GM10248 (cell line): ENCODE measurements at regions of chr1 and their contacts with region 1.

Region 1: DNA sequence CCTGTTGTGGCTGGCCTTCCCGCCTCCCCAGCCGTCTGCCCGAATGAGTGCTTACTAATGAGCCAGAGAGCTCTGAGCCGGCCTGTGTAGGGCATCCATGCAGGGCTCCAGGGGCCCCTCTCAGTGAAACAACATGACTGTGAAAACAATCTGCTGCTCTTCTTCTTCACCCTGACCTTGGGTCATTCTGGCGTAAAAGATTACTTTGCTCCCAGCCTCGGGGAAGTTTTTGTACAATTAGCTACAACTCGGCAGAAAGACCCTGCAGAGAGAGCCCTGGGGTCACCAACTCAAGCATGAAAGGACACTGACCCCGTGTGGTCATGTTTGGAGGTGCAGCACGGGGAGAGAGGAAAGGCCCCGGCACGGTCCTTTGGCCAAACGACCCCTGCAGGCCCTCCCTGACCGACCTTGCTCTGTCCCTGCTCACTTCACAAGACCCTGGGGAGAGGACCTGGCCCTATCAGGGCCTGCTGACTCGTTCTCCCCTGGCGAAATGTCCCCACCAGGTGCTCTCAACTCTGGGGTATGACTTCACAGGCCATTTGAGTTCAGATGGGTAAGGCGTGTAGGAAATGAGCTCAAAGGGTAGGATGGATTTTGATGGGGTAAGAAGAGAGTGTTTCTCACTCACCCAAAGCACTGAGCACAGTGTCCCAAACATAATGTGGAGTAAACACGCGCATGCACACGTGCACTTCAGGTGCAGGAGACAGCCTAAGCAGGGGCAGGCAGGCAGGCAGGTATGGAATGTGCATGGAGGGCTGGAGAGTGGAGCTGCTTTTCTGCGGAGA is 22.9 kb upstream of the FAM20B start:
- DNase-seq: peak; percentile 66
- CTCF ChIP-seq: peak; percentile 90

Region 2: GRCh38 chr1:178532392-178532791 is 470.4 kb before region 1 on chr1:
- CTCF ChIA-PET with region 1: interaction called, 91 read pairs
- POLR2A ChIA-PET with region 1: no interaction called
- DNase-seq: peak; percentile 84
- CTCF ChIP-seq: peak; percentile 95

Region 3: GRCh38 chr1:178548107-178548506 is 454.6 kb before region 1 on chr1:
- CTCF ChIA-PET with region 1: interaction called, 49 read pairs
- POLR2A ChIA-PET with region 1: no interaction called
- DNase-seq: no peak
- CTCF ChIP-seq: no peak

Region 4: DNA sequence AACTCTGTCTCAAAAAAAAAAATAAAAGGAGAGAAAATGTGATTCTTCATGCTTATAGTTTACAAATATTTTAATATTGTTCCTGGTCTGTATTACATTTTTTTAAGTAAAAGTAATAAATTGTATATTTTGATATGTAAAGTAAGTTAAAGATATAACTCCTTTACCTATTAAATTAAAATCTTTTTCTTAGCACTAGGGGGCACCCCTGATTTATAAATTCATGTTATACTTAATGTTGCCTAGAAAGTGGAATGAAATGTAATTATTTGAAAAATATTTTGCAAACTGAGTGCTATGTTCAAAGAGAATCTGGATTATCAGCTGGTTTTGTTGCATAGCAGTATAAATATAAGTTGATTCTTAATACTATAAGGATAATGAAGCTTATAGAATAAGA is 228.5 kb before region 1 on chr1:
- CTCF ChIA-PET with region 1: interaction called, 30 read pairs
- POLR2A ChIA-PET with region 1: no interaction called
- DNase-seq: no peak
- CTCF ChIP-seq: peak; percentile 20

Region 5: DNA sequence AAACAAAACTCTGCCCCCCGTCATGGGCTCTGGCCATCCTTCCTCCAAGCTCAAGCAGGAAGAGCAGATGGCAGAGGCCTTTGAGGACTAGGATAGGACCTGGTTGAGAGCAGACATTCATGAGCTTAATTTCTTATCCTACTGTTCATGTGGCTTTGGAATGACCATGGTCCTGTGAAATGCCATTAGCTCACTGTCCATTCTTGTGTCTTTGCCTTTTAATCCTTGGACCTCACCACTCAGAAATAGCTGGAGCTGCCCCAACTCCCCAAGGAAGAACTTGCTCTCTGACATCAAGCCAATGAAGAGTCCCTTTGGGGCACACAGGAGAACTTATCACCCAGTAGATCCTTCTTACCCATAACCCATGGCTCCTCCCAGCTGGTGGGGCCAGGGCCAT is 11.4 kb after region 1 on chr1:
- CTCF ChIA-PET with region 1: interaction called, 16 read pairs
- POLR2A ChIA-PET with region 1: no interaction called
- DNase-seq: no peak
- CTCF ChIP-seq: no peak

Region 6: DNA sequence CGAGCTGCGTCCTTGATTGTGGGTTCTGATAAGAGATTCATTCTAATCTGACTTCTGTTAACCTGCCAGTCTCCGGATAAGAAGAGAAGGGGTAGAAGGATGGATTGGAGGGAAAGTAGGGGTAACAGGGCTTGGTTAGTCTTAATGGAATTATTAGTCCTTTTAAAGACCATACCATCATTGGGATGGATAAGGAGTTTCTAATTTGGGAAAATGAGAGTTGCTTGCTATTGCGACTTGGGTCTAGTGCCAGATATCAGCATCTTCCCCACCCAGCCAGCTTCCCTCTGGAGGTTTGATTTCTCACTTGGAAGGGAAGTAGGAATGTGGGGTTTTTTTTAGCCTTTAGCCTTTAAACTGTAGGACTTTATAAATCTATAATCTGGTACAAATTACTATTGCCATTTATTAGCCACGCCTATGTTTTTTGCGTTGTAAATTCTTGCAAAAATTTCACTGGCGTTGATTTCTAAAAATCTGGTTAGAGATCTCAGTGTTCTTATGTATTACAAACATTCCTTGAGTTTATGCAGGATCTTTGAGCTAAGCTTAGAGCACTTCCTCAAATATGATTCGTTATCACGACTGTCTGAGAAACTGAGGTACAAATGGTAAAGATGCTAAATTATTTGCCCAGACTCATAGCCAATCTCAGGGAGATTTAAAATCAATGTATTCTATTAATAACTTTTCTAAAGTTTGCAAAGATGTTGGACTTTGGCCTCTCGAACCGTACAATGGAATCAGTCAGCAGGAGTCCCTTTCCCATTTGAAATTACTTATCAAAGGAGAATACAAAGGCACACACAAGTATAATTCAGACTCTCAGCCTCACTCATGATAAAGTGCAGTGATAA is 24.3 kb after region 1 on chr1:
- CTCF ChIA-PET with region 1: interaction called, 11 read pairs
- POLR2A ChIA-PET with region 1: no interaction called
- DNase-seq: no peak
- CTCF ChIP-seq: no peak